GM23248 (cell line): ENCODE measurements at regions of chrX and their contacts with region 1.

Region 1: DNA sequence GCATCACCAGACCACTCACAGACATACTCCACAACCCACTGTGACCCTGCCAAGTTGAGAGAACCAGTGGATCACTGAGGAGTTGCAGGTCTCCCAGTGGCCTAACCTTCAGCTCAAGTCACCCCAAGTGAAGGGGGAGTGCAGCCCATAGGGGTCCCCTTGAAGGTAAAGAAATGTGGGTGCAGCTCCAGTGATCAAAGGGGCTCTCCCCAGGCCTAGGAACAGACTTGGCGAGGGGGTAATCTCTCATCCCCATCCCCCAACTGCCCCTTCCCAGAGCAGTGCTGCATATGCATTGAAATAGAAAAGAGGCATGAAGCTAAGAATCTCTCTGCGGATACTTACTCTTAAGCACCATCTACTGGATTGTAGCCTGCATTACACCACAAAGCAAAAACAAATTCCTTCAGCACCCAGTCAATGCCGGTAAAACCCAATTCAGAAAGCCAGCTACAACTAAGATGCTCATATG is 27.0 kb downstream of the MAGEE1 start:
- DNase-seq: peak; percentile 41
- H3K4me3 ChIP-seq: no peak overlapping the region
- H3K27ac ChIP-seq: no peak overlapping the region
- H3K4me1 ChIP-seq: no peaks in the 10 kb centered on the region
- H3K27me3 ChIP-seq: no peaks in the 10 kb centered on the region

Region 2: GRCh38 chrX:76279000-76279399 is 175.5 kb before region 1 on chrX:
- in situ Hi-C with region 1: loop called (anchors 25 kb)
- DNase-seq: peak; percentile 42
- H3K4me3 ChIP-seq: no peak overlapping the region
- H3K27ac ChIP-seq: no peak overlapping the region
- H3K4me1 ChIP-seq: no peaks in the 10 kb centered on the region
- H3K27me3 ChIP-seq: no peaks in the 10 kb centered on the region